ENCODE measurements at regions of chr6 and their contacts with region 1.

Region 1: DNA sequence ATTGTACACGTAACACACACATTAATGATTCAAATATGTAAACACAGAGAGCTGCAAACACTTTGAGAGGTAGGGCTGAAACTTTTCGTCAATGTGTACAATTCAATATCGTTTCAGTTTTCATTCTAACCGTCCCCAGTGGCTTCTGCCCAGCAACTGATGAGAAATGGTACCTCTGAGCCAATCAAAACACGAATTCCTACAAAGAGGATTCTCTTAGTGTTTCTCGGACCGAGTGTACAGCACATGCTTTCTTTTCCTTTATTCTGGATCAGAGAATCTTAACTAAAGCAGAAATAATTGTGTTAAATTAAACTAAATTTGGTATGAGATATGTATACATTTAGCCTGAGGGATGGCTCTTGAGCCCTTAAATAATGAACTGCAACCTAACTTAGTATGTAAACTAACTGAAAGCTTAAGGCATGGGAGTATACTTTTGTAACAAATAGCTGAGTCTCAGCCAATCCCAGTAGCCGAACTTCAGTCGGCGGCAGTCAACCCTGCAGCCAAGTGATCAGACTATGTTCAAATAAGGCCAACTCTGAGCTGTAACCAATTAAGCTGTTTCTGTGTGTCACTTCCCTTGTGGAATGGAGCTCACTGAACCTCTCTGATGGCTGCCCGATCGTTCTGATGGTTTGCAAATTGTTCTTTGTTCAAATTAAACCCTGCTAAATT is 16.1 kb downstream of the BTN2A1 start:
- DNase-seq: peak; percentile 91 to 94 (median 92)
- H3K4me3 ChIP-seq: peak overlapping the region; percentile 63 to 73
- H3K4me3 Mint-ChIP-seq: peak overlapping the region; percentile 84 to 99 (median 94)
- H3K27ac ChIP-seq: peak overlapping the region; percentile 81
- H3K27ac Mint-ChIP-seq: peak overlapping the region; percentile 99 to 100 (median 99)
- H3K4me1 ChIP-seq: peaks cover 52% of the 10 kb centered on the region
- H3K4me1 Mint-ChIP-seq: peaks cover 37 to 72% (median 51%) of the 10 kb centered on the region in 4 donors
- H3K27me3 ChIP-seq: no peaks in the 10 kb centered on the region
- H3K27me3 Mint-ChIP-seq: no peaks in the 10 kb centered on the region

Region 2: GRCh38 chr6:26196846-26197648 is 276.9 kb before region 1 on chr6:
- CTCF ChIA-PET with region 1: no interaction called
- POLR2A ChIA-PET with region 1: interaction called, 14 read pairs
- intact Hi-C with region 1: no loop called
- DNase-seq: peak; percentile 92 to 93 (median 92)
- H3K4me3 ChIP-seq: peak overlapping the region; percentile 83 to 97
- H3K4me3 Mint-ChIP-seq: peak overlapping the region; percentile 94 to 99 (median 97)
- H3K27ac ChIP-seq: peak overlapping the region; percentile 84
- H3K27ac Mint-ChIP-seq: peak overlapping the region; percentile 96 to 100 (median 98)
- H3K4me1 ChIP-seq: peaks cover 43% of the 10 kb centered on the region
- H3K4me1 Mint-ChIP-seq: peaks cover 23 to 57% (median 41%) of the 10 kb centered on the region in 4 donors
- H3K27me3 ChIP-seq: no peaks in the 10 kb centered on the region
- H3K27me3 Mint-ChIP-seq: no peaks in the 10 kb centered on the region

Region 3: GRCh38 chr6:26363882-26364701 is 109.8 kb before region 1 on chr6:
- CTCF ChIA-PET with region 1: no interaction called
- POLR2A ChIA-PET with region 1: interaction called, 29 read pairs
- intact Hi-C with region 1: loop called (anchors 1 kb)
- DNase-seq: peak in 3 of 5 donors; percentile 40 to 44 (median 43)
- H3K4me3 ChIP-seq: peak overlapping the region; percentile 79 to 87
- H3K4me3 Mint-ChIP-seq: peak overlapping the region in 1 of 8 donors; percentile 21
- H3K27ac ChIP-seq: peak overlapping the region; percentile 96
- H3K27ac Mint-ChIP-seq: no peak overlapping the region
- H3K4me1 ChIP-seq: peaks cover 69% of the 10 kb centered on the region
- H3K4me1 Mint-ChIP-seq: peaks cover 45 to 56% (median 52%) of the 10 kb centered on the region in 4 donors
- H3K27me3 ChIP-seq: no peaks in the 10 kb centered on the region
- H3K27me3 Mint-ChIP-seq: no peaks in the 10 kb centered on the region

Region 4: DNA sequence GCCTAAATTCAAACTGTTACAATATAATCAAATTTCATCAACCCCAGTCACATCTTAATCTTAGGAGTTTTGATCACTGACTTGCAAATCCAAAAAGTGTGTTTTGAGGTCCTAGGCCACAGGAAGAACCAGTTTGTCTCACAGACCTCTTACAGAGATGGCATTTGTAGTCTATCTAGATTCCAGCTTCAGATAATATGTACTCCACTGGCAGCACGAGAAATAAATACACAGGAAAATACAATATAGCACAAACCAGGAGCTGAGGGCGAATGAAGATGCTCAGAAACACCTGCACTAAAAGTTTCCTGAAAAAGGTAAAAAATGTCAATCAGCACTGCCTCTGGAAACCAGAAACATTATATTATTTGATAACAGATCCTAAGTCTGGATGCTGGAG is 34.2 kb before region 1 on chr6:
- CTCF ChIA-PET with region 1: interaction called, 4 read pairs
- POLR2A ChIA-PET with region 1: interaction called, 30 read pairs
- intact Hi-C with region 1: loop called (anchors 1 kb)
- DNase-seq: peak in 1 of 5 donors; percentile 31
- H3K4me3 ChIP-seq: peak overlapping the region in 1 of 2 donors; percentile 95
- H3K4me3 Mint-ChIP-seq: peak overlapping the region; percentile 93 to 100 (median 98)
- H3K27ac ChIP-seq: peak overlapping the region; percentile 97
- H3K27ac Mint-ChIP-seq: peak overlapping the region; percentile 97 to 100 (median 99)
- H3K4me1 ChIP-seq: peaks cover 37% of the 10 kb centered on the region
- H3K4me1 Mint-ChIP-seq: peaks cover 23 to 55% (median 45%) of the 10 kb centered on the region in 4 donors
- H3K27me3 ChIP-seq: no peaks in the 10 kb centered on the region
- H3K27me3 Mint-ChIP-seq: no peaks in the 10 kb centered on the region

Region 5: GRCh38 chr6:26501482-26501986 is 27.6 kb after region 1 on chr6:
- CTCF ChIA-PET with region 1: interaction called, 3 read pairs
- POLR2A ChIA-PET with region 1: interaction called, 27 read pairs
- intact Hi-C with region 1: loop called (anchors 1 kb)
- DNase-seq: peak; percentile 29 to 56 (median 34)
- H3K4me3 ChIP-seq: peak overlapping the region in 1 of 2 donors; percentile 9
- H3K4me3 Mint-ChIP-seq: peak overlapping the region; percentile 76 to 88 (median 81)
- H3K27ac ChIP-seq: no peak overlapping the region
- H3K27ac Mint-ChIP-seq: peak overlapping the region in 5 of 7 donors; percentile 9 to 72 (median 41)
- H3K4me1 ChIP-seq: peaks cover 13% of the 10 kb centered on the region
- H3K4me1 Mint-ChIP-seq: peaks cover 10 to 19% (median 13%) of the 10 kb centered on the region in 4 donors
- H3K27me3 ChIP-seq: peaks cover 13% of the 10 kb centered on the region
- H3K27me3 Mint-ChIP-seq: peaks cover 13% of the 10 kb centered on the region in 2 donors

Region 6: DNA sequence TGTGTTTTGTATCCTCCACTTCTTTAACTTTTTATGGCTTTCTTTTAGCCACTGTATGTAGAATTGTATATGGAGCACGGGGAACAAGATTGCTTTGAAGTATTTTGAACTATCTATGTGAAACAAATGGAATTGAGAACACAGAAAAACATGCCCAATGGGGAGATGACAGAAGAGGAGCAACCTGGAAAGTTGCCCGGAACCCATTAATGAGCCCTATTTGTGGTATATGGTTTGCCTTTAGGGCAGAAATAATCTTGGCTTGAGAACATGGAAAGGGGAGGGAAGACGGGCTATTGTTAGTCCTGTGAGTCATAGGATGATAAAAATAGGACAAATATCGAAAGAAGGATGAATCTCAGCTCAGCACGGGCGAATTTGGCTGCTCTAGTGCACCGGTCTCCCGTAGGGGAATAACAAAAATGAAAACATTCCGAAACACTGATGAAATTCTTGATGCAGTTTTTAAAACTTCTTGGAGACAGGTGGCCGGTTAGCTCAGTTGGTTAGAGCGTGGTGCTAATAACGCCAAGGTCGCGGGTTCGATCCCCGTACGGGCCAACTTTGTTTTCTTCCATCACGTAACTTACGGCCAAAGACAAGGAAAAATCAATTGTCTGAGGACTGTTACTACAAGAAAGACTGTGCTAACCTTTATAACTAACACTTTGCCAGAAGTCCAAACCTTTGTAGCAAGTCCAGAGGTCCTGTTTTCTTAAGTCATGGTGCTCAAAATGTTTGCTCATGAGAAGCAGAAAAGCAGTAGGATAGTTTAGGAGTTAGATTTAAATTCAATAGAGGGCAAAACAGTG is 79.9 kb after region 1 on chr6:
- CTCF ChIA-PET with region 1: no interaction called
- POLR2A ChIA-PET with region 1: interaction called, 26 read pairs
- intact Hi-C with region 1: loop called (anchors 5 kb)
- DNase-seq: peak; percentile 83 to 88 (median 86)
- H3K4me3 ChIP-seq: peak overlapping the region; percentile 67 to 93
- H3K4me3 Mint-ChIP-seq: no peak overlapping the region
- H3K27ac ChIP-seq: peak overlapping the region; percentile 31
- H3K27ac Mint-ChIP-seq: no peak overlapping the region
- H3K4me1 ChIP-seq: peaks cover 31% of the 10 kb centered on the region
- H3K4me1 Mint-ChIP-seq: peaks cover 11 to 28% (median 19%) of the 10 kb centered on the region in 4 donors
- H3K27me3 ChIP-seq: no peaks in the 10 kb centered on the region
- H3K27me3 Mint-ChIP-seq: peaks cover 0 to 2% of the 10 kb centered on the region in 2 donors